ENCODE measurements at regions of chr3 and their contacts with region 1.

Region 1: GRCh38 chr3:17110660-17111396 is 226.1 kb downstream of the PLCL2 start:
- DNase-seq: no peak
- H3K4me3 Mint-ChIP-seq: no peak overlapping the region
- H3K27ac Mint-ChIP-seq: no peak overlapping the region
- H3K4me1 Mint-ChIP-seq: peaks cover 14% of the 10 kb centered on the region
- H3K27me3 Mint-ChIP-seq: peaks cover 9% of the 10 kb centered on the region

Region 2: DNA sequence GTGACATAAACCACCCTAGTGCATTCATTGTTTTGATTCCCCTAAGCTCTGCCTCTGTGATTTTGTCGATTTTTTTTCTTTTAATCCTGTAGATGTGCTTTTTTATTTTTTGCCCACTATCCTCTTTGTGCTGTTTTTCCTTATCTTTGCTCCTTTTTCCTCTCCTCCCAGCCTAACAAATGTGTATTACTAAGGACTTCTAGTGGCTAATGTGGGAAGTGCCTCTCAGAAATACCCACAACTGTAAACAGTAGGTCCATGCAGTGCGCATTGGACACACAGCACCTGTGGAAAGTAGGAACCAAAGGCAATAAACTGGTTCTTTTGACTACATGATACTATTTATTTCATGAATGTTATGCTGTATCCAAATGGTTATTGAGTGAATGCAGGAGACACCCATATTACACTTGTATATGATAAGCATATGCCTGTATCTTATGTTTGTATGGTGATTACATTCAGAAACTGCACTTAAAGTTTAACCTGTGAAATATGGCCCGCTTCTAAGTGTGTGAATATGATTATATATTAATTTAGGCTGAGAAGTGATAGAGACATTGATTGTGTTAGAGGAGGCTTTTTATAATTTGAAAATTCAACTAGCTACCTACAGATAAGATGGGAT is 78.3 kb before region 1 on chr3:
- intact Hi-C with region 1: no loop called
- DNase-seq: no peak
- H3K4me3 Mint-ChIP-seq: no peak overlapping the region
- H3K27ac Mint-ChIP-seq: peak overlapping the region; percentile 2
- H3K4me1 Mint-ChIP-seq: peaks cover 64% of the 10 kb centered on the region
- H3K27me3 Mint-ChIP-seq: peaks cover 1% of the 10 kb centered on the region

Region 3: DNA sequence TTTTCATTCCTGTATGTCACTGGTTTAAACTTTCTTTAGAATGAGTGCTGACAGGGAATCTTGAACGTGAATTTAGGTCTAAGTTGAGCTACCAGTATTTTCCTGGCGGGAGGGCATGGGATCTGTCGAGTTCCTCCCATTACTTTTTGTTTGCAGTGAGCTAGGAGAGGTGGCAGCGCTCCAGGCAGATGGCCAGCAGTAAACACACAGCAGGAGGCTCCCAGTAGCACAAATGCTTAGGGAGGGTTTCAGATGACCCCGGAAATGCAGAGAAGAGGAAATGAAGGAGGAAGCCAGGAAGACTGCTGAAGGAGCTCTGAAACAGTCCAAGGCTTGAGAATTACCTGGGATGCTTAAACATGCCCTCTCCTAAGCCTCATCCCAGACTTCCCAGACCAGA is 40.2 kb before region 1 on chr3:
- intact Hi-C with region 1: loop called (anchors 5 kb)
- DNase-seq: no peak
- H3K4me3 Mint-ChIP-seq: no peak overlapping the region
- H3K27ac Mint-ChIP-seq: no peak overlapping the region
- H3K4me1 Mint-ChIP-seq: peaks cover 31% of the 10 kb centered on the region
- H3K27me3 Mint-ChIP-seq: no peaks in the 10 kb centered on the region

Region 4: GRCh38 chr3:17514597-17514996 is 403.8 kb after region 1 on chr3:
- intact Hi-C with region 1: no loop called
- DNase-seq: no peak
- H3K4me3 Mint-ChIP-seq: no peak overlapping the region
- H3K27ac Mint-ChIP-seq: no peak overlapping the region
- H3K4me1 Mint-ChIP-seq: no peaks in the 10 kb centered on the region
- H3K27me3 Mint-ChIP-seq: no peaks in the 10 kb centered on the region

Measured in activated T-helper 1 cell treated with anti-CD3 and anti-CD28 coated beads, Interleukin-12 subunit alpha, Interleukin-12 subunit beta, Interleukin-2, Interleukin-4 antibody, amounts not matched to agents 30 ng/mL and 10 ng/mL and 1 ng/mL, durations not matched to agents 14 hours and 24 hours and 36 hours (primary cell).